OCI-LY7 (cell line): ENCODE measurements at regions of chr10 and their contacts with region 1.

Region 1: GRCh38 chr10:22316285-22317120 is at the start of gene COMMD3:
- DNase-seq: peak; percentile 89
- H3K4me3 ChIP-seq: peak within 1 kb of the TSS; percentile 92
- H3K27ac ChIP-seq: peak within 1 kb of the TSS; percentile 61
- H3K4me1 ChIP-seq: peaks cover 28% of the 10 kb centered on the region
- CTCF ChIP-seq: no peak
- total RNA-seq, gene COMMD3: 24.6 and 30.1 TPM in 2 replicates

Region 2: DNA sequence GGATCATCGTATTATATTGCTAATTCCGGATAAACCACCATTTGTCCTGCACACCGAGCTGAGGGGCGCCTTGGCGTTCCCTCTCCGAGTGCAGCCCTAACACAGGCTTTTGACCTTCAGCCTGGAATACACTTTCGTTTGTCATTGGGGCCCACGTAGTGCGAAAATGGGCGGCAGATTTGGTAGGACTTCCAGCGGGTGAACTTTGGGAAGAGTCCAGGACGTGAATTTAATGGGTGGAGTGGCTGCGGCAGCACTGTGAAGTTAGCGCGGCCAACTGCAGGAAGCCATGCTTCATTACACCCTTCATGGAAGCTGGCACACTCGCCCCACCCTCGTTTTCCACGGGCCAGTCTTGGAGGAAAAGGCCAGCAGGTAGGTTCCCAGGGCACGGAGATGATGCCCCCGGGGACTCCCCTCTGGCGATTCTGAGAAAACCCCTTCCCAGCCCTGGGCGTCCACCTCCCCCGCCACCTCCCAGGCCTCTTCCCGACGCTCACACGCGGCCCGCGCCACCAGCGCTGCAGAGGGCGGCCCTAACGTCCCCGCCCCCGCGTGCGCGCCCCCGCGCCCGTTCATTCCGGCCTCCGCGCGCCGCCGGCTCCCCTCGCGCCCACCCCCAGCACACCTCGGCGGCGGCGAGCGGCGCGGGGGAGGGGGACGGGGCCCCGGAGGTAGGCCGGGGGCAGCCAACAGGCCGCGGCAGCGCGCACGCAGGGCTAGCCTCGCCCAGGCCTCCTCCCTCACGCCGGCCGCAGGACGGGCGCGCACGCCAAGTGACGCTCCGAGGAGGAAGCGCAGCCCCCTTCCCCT is 782.8 kb before region 1 on chr10 and contains the start of gene MLLT10:
- CTCF ChIA-PET with region 1: no interaction called
- POLR2A ChIA-PET with region 1: no interaction called
- intact Hi-C with region 1: loop called (anchors 5 kb)
- DNase-seq: peak; percentile 98
- H3K4me3 ChIP-seq: peak within 1 kb of the TSS; percentile 72
- H3K27ac ChIP-seq: peak within 1 kb of the TSS; percentile 70
- H3K4me1 ChIP-seq: peaks cover 24% of the 10 kb centered on the region
- CTCF ChIP-seq: no peak
- total RNA-seq, gene MLLT10: 50.4 and 68.4 TPM in 2 replicates

Region 3: DNA sequence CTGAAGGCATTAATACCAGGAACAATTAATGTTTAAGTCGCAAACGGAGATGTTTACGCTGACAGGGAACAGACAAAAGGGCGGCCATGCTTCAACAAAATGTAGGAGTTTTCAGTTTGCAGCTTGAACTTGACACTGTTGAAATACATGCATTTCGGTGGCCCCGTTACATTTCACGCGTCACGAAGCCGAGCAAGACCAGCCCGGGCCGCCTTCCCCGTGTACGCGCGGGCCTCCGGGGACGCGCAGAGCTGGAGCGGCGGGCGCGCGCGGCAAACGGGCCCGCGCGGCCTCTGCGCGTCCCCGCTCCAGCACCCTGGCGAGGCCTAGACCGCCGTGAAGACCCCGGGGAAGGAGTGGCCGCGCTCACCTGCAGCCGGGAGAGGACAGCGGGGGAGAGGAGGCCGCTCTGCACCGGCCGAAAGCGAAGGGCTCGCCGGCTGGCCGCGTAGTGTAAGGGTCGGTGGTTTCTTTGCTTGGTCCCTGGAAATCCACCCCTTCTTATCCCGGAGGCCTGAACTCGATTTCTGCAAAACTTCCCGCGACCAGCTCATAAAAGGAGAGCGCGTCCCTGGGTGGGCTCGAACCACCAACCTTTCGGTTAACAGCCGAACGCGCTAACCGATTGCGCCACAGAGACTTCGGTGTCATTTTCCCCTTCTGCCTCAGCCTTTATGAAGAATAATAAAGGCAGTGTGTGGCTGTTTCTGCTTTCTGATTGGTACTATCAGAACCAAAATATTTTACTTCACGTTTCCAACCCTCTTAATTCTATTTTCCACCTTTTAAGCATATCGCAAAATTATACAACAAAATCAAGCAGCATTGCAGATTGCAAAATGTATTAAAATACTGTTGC is 87.3 kb before region 1 on chr10:
- CTCF ChIA-PET with region 1: interaction called, 3 read pairs
- POLR2A ChIA-PET with region 1: interaction called, 11 read pairs
- intact Hi-C with region 1: loop called (anchors 1 kb)
- DNase-seq: peak; percentile 86
- H3K4me3 ChIP-seq: peak overlapping the region; percentile 77
- H3K27ac ChIP-seq: peak overlapping the region; percentile 34
- H3K4me1 ChIP-seq: peaks cover 6% of the 10 kb centered on the region
- CTCF ChIP-seq: no peak

Region 4: DNA sequence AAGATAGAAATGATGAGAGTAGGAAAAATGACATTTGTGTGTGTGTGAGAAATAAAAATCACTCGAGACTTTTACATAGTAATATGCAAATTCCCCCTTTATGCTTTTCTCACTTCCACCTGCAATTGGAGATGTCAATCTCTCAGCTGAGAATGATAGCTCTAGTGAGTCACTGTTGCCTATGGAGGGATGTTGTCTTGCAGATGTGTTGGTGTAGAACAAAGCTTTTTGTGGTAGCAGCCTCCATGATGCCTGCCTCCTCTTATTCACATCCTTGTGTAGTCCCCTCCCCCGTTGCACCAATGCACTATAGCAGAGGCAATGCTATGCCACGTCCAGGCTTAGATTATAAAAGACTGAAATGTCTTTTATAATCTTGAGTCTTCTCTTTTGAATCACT is 62.6 kb after region 1 on chr10:
- CTCF ChIA-PET with region 1: no interaction called
- POLR2A ChIA-PET with region 1: interaction called, 9 read pairs
- intact Hi-C with region 1: loop called (anchors 2 kb)
- DNase-seq: peak; percentile 53
- H3K4me3 ChIP-seq: peak overlapping the region; percentile 25
- H3K27ac ChIP-seq: peak overlapping the region; percentile 42
- H3K4me1 ChIP-seq: peaks cover 33% of the 10 kb centered on the region
- CTCF ChIP-seq: no peak

Region 5: DNA sequence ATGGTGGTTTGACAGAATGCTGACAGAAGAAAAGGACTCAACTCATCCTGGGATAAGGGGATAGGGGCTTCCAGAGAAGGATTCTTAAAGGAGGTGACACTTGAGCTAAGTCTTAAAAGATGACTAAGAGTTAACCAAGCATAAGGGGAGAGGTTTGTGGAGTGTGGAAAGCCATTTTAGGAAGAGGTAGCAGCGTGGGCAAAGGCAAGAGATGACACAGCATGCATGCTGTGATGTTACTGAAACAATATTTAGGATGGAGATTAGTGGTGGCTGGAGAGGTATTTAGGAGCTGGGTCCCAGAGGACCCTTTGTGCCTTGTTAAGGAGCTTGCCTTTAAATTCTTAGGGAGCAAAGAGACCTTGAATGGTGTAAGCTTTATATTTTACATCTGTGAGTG is 93.9 kb after region 1 on chr10:
- CTCF ChIA-PET with region 1: no interaction called
- POLR2A ChIA-PET with region 1: no interaction called
- intact Hi-C with region 1: no loop called
- DNase-seq: no peak
- H3K4me3 ChIP-seq: no peak overlapping the region
- H3K27ac ChIP-seq: no peak overlapping the region
- H3K4me1 ChIP-seq: no peaks in the 10 kb centered on the region
- CTCF ChIP-seq: no peak

Region 6: GRCh38 chr10:22714479-22715289 is 398.2 kb after region 1 on chr10 and contains the start of gene PIP4K2A:
- CTCF ChIA-PET with region 1: no interaction called
- POLR2A ChIA-PET with region 1: no interaction called
- intact Hi-C with region 1: loop called (anchors 5 kb)
- DNase-seq: peak; percentile 84
- H3K4me3 ChIP-seq: peak within 1 kb of the TSS; percentile 88
- H3K27ac ChIP-seq: peak within 1 kb of the TSS; percentile 41
- H3K4me1 ChIP-seq: peaks cover 28% of the 10 kb centered on the region
- CTCF ChIP-seq: no peak
- total RNA-seq, gene PIP4K2A: 32.5 and 37.9 TPM in 2 replicates